Endothelial cell of umbilical vein (primary cell): ENCODE measurements at regions of chr11 and their contacts with region 1.

Region 1: DNA sequence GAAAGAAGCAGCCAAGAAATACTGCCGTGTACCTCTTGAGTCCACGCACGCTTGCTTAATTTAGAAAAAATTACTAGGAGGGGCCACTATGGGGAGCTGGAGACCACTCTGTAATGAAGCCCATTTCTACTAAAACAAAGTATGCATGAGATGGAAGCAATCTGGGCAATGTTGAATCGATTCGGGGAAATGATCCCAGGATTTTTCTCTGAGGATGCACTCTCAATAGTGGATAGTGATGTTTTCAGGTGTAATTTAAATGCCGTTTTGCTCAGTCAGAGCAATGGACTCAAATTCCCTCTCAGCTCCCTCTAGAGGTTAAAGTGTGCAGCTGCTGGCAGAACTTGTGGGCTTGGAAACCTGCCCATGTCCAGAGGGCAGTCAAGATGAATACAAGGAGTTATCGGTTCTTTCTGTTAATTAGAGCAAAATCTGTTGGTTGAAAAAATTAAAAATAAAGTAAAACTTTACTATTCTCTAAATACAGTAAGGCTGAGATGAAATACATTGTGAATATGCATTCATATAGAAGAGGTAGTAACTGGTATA is 64.1 kb downstream of the ME3 start:
- DNase-seq: peak; percentile 91
- H3K4me3 ChIP-seq: peak overlapping the region in 1 of 3 experiments; percentile 10
- H3K27ac ChIP-seq: peak overlapping the region; percentile 87
- H3K4me1 ChIP-seq: peaks cover 37% of the 10 kb centered on the region
- H3K27me3 ChIP-seq: no peaks in the 10 kb centered on the region
- CTCF ChIP-seq: peak; percentile 77 to 85
- POLR2A ChIP-seq: no peak

Region 2: GRCh38 chr11:86360775-86361395 is 247.4 kb before region 1 on chr11:
- CTCF ChIA-PET with region 1: interaction called, 7 read pairs
- POLR2A ChIA-PET with region 1: no interaction called
- dilution Hi-C with region 1: no loop called
- intact Hi-C with region 1: loop called (anchors 2 kb)
- DNase-seq: peak; percentile 61
- H3K4me3 ChIP-seq: no peak overlapping the region
- H3K27ac ChIP-seq: peak overlapping the region; percentile 34
- H3K4me1 ChIP-seq: peaks cover 7% of the 10 kb centered on the region
- H3K27me3 ChIP-seq: no peaks in the 10 kb centered on the region
- CTCF ChIP-seq: peak; percentile 19 to 33
- POLR2A ChIP-seq: no peak

Region 3: DNA sequence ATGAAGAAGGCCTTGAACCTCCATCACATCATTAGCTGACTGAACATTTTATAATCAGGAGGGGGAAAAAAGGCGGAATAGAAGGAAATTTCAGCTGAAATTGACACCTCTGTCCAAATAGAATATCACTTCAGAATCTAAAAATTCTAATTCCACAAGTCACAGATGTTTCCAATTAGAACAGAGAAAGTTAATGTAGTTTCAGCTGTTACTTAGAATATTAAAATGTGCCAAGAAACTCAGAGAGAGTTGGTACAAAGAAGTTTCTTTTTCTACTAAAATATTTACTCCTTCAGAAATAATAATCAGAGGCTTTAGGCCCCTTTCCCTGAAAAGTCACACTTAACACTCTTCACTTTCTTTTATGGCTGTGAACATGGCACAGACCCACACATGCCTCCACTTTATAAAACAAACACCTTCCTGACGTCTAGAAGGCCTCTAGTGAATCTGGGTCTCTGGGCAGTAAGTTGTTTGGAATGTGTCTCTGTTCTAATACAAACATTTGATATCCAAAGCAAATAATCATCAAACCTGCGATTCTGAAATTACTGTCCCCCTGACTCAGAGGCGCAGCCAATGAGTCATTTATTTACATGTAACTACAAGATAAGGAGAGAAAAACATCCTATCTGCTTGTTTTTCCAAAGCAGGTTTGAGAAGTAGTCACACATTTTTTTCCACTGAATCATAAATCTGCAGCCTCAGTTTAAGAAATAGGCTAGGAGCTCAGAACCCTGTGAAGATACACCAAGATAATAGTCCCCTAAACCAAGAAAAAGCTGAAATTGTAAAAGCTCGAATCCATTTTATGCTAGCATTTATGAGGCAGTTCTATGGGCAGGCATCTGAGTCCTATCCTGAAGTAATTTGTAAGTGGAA is 84.3 kb before region 1 on chr11:
- CTCF ChIA-PET with region 1: interaction called, 15 read pairs
- POLR2A ChIA-PET with region 1: no interaction called
- dilution Hi-C with region 1: no loop called
- intact Hi-C with region 1: loop called (anchors 1 kb)
- DNase-seq: peak; percentile 99
- H3K4me3 ChIP-seq: peak overlapping the region in 1 of 3 experiments; percentile 14
- H3K27ac ChIP-seq: peak overlapping the region; percentile 93
- H3K4me1 ChIP-seq: peaks cover 46% of the 10 kb centered on the region
- H3K27me3 ChIP-seq: no peaks in the 10 kb centered on the region
- CTCF ChIP-seq: no peak
- POLR2A ChIP-seq: peak; percentile 54

Region 4: GRCh38 chr11:86571273-86571948 is 36.9 kb before region 1 on chr11:
- CTCF ChIA-PET with region 1: interaction called, 15 read pairs
- POLR2A ChIA-PET with region 1: no interaction called
- dilution Hi-C with region 1: no loop called
- intact Hi-C with region 1: loop called (anchors 1 kb)
- DNase-seq: peak; percentile 37
- H3K4me3 ChIP-seq: no peak overlapping the region
- H3K27ac ChIP-seq: no peak overlapping the region
- H3K4me1 ChIP-seq: peaks cover 38% of the 10 kb centered on the region
- H3K27me3 ChIP-seq: no peaks in the 10 kb centered on the region
- CTCF ChIP-seq: peak; percentile 48 to 56
- POLR2A ChIP-seq: no peak

Region 5: GRCh38 chr11:86620891-86621521 is 12.7 kb after region 1 on chr11:
- CTCF ChIA-PET with region 1: interaction called, 18 read pairs
- POLR2A ChIA-PET with region 1: no interaction called
- dilution Hi-C with region 1: no loop called
- intact Hi-C with region 1: no loop called
- DNase-seq: peak; percentile 73
- H3K4me3 ChIP-seq: no peak overlapping the region
- H3K27ac ChIP-seq: peak overlapping the region; percentile 35
- H3K4me1 ChIP-seq: peaks cover 9% of the 10 kb centered on the region
- H3K27me3 ChIP-seq: no peaks in the 10 kb centered on the region
- CTCF ChIP-seq: no peak
- POLR2A ChIP-seq: no peak

Region 6: DNA sequence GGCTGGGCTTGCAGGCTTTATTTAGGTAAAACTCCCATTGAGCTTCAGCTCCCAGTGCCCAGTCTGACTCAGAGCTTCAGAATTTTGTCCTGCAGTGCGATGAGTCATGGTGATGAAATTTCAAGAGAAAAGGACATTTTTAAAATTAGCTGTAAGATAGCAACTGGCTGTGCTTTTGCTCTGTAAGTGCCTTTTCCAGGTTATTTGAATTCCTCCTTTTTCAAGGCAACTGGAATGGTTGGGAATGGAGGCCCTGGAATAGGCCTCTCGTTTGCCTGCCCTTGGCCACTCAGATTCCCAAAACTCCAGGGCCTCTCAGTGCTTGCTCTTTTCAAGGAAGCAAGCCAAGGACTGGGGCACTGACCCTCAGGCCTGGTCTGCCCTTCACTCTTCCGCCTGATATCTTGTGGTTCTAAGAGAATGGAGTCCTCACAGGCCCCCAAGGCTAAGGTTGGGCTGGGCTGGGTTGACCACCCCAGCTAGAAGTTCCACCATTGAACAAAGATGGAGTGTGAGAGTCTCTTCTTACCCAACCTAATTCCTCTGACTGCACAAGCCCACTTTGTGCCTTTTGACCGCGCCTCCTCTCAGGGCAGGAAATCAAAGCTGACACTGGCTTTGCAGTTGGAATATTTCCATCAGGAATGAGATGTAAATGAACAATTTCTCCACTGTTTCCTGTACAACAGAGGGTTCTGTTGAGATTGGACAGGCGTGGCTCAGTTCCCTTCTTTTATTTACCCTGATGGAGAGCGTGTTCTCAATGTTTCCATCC is 132.6 kb after region 1 on chr11:
- CTCF ChIA-PET with region 1: interaction called, 11 read pairs
- POLR2A ChIA-PET with region 1: no interaction called
- dilution Hi-C with region 1: no loop called
- intact Hi-C with region 1: loop called (anchors 1 kb)
- DNase-seq: peak; percentile 94
- H3K4me3 ChIP-seq: peak overlapping the region in 1 of 3 experiments; percentile 7
- H3K27ac ChIP-seq: peak overlapping the region; percentile 99
- H3K4me1 ChIP-seq: peaks cover 78% of the 10 kb centered on the region
- H3K27me3 ChIP-seq: no peaks in the 10 kb centered on the region
- CTCF ChIP-seq: no peak
- POLR2A ChIP-seq: no peak

Region 7: DNA sequence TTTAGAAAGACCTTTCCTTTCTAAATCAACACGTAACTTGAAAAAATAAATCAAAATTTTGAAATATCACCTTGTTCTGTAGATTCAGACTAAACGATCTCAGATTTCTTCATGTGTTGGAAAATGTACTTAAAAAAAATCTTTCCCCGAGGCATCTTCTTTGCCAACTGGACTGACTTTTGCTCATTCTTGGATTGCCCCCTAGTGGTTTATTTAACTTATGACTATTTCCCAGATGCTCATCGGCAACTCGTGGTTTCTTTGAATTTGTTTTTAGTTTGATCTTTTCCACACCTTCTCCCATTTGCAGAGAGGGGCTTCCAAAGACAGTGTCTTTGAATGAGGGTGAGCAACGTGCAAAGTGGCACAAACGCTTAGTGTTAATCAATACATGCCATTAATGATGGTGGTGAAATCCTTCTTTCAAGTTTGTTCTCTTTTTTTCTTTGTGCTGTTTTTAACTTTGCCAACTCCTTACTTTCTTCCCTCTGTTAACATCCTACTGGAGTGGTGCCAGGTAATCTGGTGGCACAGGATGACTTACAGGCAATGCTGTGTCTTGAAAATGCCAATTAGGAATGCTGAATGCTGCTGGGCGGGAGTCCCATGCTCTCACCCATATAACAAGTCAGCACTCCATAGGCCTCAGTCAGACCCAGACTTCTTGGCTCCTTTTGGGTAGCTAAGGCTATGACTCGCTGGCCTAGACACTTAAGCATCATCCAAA is 210.3 kb after region 1 on chr11:
- CTCF ChIA-PET with region 1: interaction called, 27 read pairs
- POLR2A ChIA-PET with region 1: no interaction called
- dilution Hi-C with region 1: no loop called
- intact Hi-C with region 1: loop called (anchors 1 kb)
- DNase-seq: peak; percentile 84
- H3K4me3 ChIP-seq: no peak overlapping the region
- H3K27ac ChIP-seq: peak overlapping the region; percentile 77
- H3K4me1 ChIP-seq: peaks cover 53% of the 10 kb centered on the region
- H3K27me3 ChIP-seq: no peaks in the 10 kb centered on the region
- CTCF ChIP-seq: peak; percentile 41 to 45
- POLR2A ChIP-seq: no peak